HCT116 (cell line): ENCODE measurements at regions of chr5 and their contacts with region 1.

Region 1: GRCh38 chr5:17204133-17204489 is 13.3 kb upstream of the BASP1 start:
- DNase-seq: no peak
- ATAC-seq: peak; percentile 17; the same call in 1 of the 2 replicates
- H3K4me3 ChIP-seq: no peak overlapping the region
- H3K27ac ChIP-seq: no peak overlapping the region
- H3K4me1 ChIP-seq: no peaks in the 10 kb centered on the region
- H3K27me3 ChIP-seq: peaks cover 9% of the 10 kb centered on the region; the same call in 1 of the 2 replicates
- CTCF ChIP-seq: no peak
- POLR2A ChIP-seq: no peak
- RAD21 ChIP-seq: no peak

Region 2: DNA sequence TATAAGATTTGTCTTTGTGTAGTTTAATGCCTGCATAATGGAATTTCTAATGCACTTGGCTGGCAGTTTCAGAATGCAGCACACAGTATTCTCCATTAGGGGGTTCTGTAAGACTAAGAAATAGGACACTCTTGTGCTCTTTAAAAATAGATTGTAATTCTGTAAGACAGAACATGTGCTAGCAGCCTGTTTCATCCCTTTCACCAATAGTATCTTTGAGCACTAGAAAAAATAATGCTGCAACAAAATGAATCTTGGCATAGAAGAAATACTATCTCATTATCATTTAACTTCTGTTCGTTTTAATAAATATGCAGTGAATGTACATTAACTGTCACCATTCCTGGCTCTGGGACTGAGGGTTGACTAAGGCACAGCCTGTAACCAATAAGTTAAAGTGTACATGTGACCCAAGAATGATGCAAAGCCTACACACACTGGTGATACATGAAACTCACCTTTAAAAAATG is 714.8 kb before region 1 on chr5:
- CTCF ChIA-PET with region 1: interaction called, 9 read pairs
- POLR2A ChIA-PET with region 1: no interaction called
- RAD21 ChIA-PET with region 1: no interaction called
- intact Hi-C with region 1: loop called (anchors 2 kb)
- DNase-seq: peak; percentile 21
- ATAC-seq: peak; percentile 83
- H3K4me3 ChIP-seq: no peak overlapping the region
- H3K27ac ChIP-seq: no peak overlapping the region
- H3K4me1 ChIP-seq: no peaks in the 10 kb centered on the region
- H3K27me3 ChIP-seq: no peaks in the 10 kb centered on the region
- CTCF ChIP-seq: peak; percentile 50 to 70 (median 56); a peak in 5 of 6 replicates
- POLR2A ChIP-seq: no peak
- RAD21 ChIP-seq: peak; percentile 73

Region 3: GRCh38 chr5:16552666-16553343 is 651.3 kb before region 1 on chr5:
- CTCF ChIA-PET with region 1: interaction called, 5 read pairs
- POLR2A ChIA-PET with region 1: no interaction called
- RAD21 ChIA-PET with region 1: no interaction called
- intact Hi-C with region 1: loop called (anchors 5 kb)
- DNase-seq: peak; percentile 49
- ATAC-seq: peak; percentile 96
- H3K4me3 ChIP-seq: no peak overlapping the region
- H3K27ac ChIP-seq: no peak overlapping the region
- H3K4me1 ChIP-seq: peaks cover 2 to 6% of the 10 kb centered on the region in 2 experiments; a peak in 1 of 4 replicates
- H3K27me3 ChIP-seq: no peaks in the 10 kb centered on the region
- CTCF ChIP-seq: peak; percentile 41 to 96 (median 94); a peak in 5 of 6 replicates
- POLR2A ChIP-seq: no peak
- RAD21 ChIP-seq: peak; percentile 30; the same call in 1 of the 2 replicates

Region 4: DNA sequence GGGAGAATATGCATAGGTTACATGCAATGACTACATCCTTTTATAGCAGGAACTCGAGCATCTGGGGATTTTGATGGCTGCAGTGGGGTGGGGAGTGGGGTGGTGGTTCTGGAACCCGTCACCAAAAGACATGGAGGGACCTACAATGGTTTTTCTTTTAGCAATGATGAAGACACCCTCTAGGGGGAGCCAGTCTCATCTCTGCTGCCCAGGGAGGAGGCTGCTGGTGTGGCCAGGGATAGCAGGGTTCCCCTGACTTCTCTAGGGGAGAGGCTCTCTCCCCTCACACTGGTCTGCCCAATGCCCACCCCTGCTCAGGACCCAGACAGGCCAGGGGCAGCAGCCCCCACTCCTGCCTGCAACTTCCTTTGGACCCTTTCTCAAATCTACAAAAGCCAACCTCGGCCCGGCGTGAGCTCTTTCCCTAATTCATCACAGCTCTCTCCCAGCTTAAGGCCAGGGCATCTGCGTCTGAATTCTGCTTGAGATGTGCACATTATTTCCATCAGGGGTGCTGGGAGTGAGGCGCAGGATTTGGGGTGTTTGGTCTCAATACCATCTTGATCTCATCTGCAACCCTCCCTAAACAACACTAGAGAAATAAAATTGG is 513.8 kb before region 1 on chr5:
- CTCF ChIA-PET with region 1: interaction called, 8 read pairs
- POLR2A ChIA-PET with region 1: no interaction called
- RAD21 ChIA-PET with region 1: no interaction called
- intact Hi-C with region 1: loop called (anchors 1 kb)
- DNase-seq: peak; percentile 19
- ATAC-seq: peak; percentile 97
- H3K4me3 ChIP-seq: no peak overlapping the region
- H3K27ac ChIP-seq: no peak overlapping the region
- H3K4me1 ChIP-seq: no peaks in the 10 kb centered on the region
- H3K27me3 ChIP-seq: no peaks in the 10 kb centered on the region
- CTCF ChIP-seq: peak; percentile 41 to 84 (median 78); a peak in 5 of 6 replicates
- POLR2A ChIP-seq: no peak
- RAD21 ChIP-seq: peak; percentile 42; the same call in 1 of the 2 replicates

Region 5: GRCh38 chr5:16791036-16791705 is 412.9 kb before region 1 on chr5:
- CTCF ChIA-PET with region 1: interaction called, 13 read pairs
- POLR2A ChIA-PET with region 1: no interaction called
- RAD21 ChIA-PET with region 1: no interaction called
- intact Hi-C with region 1: no loop called
- DNase-seq: peak; percentile 37
- ATAC-seq: peak; percentile 62
- H3K4me3 ChIP-seq: no peak overlapping the region
- H3K27ac ChIP-seq: no peak overlapping the region
- H3K4me1 ChIP-seq: no peaks in the 10 kb centered on the region
- H3K27me3 ChIP-seq: no peaks in the 10 kb centered on the region
- CTCF ChIP-seq: peak; percentile 49 to 69 (median 56); a peak in 5 of 6 replicates
- POLR2A ChIP-seq: no peak
- RAD21 ChIP-seq: peak; percentile 78

Region 6: GRCh38 chr5:17224858-17225511 is 20.9 kb after region 1 on chr5:
- CTCF ChIA-PET with region 1: no interaction called
- POLR2A ChIA-PET with region 1: no interaction called
- RAD21 ChIA-PET with region 1: no interaction called
- intact Hi-C with region 1: no loop called
- DNase-seq: no peak
- ATAC-seq: no peak
- H3K4me3 ChIP-seq: no peak overlapping the region
- H3K27ac ChIP-seq: no peak overlapping the region
- H3K4me1 ChIP-seq: no peaks in the 10 kb centered on the region
- H3K27me3 ChIP-seq: peaks cover 15% of the 10 kb centered on the region; the same call in 1 of the 2 replicates
- CTCF ChIP-seq: no peak
- POLR2A ChIP-seq: no peak
- RAD21 ChIP-seq: no peak

Region 7: DNA sequence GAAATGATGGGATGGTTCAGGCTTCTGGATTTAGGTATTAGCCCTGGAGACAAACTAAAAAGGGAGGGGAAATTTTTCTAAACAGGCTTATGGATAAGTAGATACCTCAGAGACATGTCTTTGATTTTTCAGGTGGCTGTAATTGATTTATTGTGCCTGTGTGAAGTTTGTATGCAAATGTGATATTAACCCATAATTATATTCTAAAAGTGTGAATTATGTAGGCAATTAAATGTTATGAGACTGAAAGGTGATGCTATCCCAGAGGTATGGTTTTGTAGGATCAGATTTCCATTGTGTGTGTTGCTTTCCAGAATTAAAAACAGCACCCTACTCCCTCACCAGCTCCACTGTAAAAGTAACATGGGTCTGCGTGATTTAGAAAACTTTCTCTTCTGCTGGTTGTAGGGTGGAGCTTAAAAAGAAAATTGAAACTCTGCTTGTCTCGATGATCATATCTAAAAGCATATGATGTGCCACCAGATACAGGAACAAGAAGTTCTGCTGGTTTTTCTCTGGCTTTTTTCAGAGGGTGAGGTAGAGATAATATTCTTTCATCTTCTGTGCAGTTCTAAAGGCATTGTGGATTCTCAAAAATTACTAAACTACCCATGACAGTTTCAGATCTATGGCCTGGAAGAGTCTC is 222.1 kb after region 1 on chr5:
- CTCF ChIA-PET with region 1: no interaction called
- POLR2A ChIA-PET with region 1: no interaction called
- RAD21 ChIA-PET with region 1: no interaction called
- intact Hi-C with region 1: no loop called
- DNase-seq: no peak
- ATAC-seq: no peak
- H3K4me3 ChIP-seq: no peak overlapping the region
- H3K27ac ChIP-seq: no peak overlapping the region
- H3K4me1 ChIP-seq: no peaks in the 10 kb centered on the region
- H3K27me3 ChIP-seq: no peaks in the 10 kb centered on the region
- CTCF ChIP-seq: no peak
- POLR2A ChIP-seq: no peak
- RAD21 ChIP-seq: no peak